Naive thymus-derived CD4-positive, alpha-beta T cell (primary cell): ENCODE measurements at regions of chr13 and their contacts with region 1.

Region 1: GRCh38 chr13:75219479-75220237 is 262.3 kb downstream of the TBC1D4 start:
- DNase-seq: peak; percentile 67 to 87 (median 79)
- ATAC-seq: peak; percentile 96
- H3K4me3 ChIP-seq: no peak overlapping the region
- H3K4me3 Mint-ChIP-seq: peak overlapping the region; percentile 28 to 77 (median 58)
- H3K27ac ChIP-seq: no peak overlapping the region
- H3K27ac Mint-ChIP-seq: peak overlapping the region in 2 of 9 donors; percentile 34 to 87
- H3K4me1 ChIP-seq: peaks cover 0 to 4% of the 10 kb centered on the region in 2 donors
- H3K4me1 Mint-ChIP-seq: peaks cover 6 to 7% (median 7%) of the 10 kb centered on the region in 7 donors
- H3K27me3 ChIP-seq: no peaks in the 10 kb centered on the region
- H3K27me3 Mint-ChIP-seq: peaks cover 15 to 48% (median 27%) of the 10 kb centered on the region in 5 donors

Region 2: GRCh38 chr13:73715114-73715910 is 1504.3 kb before region 1 on chr13:
- CTCF ChIA-PET with region 1: interaction called, 5 read pairs
- POLR2A ChIA-PET with region 1: no interaction called
- intact Hi-C with region 1: loop called in 1 of 2 experiments (anchors 10 kb)
- DNase-seq: peak in 8 of 9 donors; percentile 53 to 85 (median 77)
- ATAC-seq: peak; percentile 90
- H3K4me3 ChIP-seq: peak overlapping the region; percentile 7
- H3K4me3 Mint-ChIP-seq: peak overlapping the region; percentile 72 to 86 (median 78)
- H3K27ac ChIP-seq: peak overlapping the region; percentile 67
- H3K27ac Mint-ChIP-seq: peak overlapping the region; percentile 87 to 99 (median 97)
- H3K4me1 ChIP-seq: peaks cover 34 to 43% of the 10 kb centered on the region in 2 donors
- H3K4me1 Mint-ChIP-seq: peaks cover 25 to 80% (median 58%) of the 10 kb centered on the region in 7 donors
- H3K27me3 ChIP-seq: no peaks in the 10 kb centered on the region
- H3K27me3 Mint-ChIP-seq: no peaks in the 10 kb centered on the region

Region 3: DNA sequence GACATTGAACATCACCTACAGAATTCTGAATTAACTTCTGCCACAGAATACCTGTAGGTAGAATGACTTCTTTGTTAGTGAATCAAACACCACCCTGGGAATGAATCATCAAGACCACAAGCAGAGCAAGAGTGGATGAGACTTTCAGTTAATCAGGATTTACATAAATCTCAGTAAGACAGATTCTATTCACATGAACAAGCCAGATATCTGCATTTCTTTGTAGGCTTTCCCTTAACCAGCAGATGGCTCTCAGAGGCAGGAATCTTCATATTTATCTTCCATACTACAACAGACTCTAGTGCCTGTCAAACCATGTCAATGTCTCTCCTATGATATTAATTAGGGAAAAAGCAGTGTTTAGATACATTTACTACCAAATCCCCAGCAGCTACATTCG is 1497.5 kb before region 1 on chr13:
- CTCF ChIA-PET with region 1: interaction called, 10 read pairs
- POLR2A ChIA-PET with region 1: no interaction called
- intact Hi-C with region 1: loop called (anchors 1 to 10 kb)
- DNase-seq: peak in 3 of 9 donors; percentile 17 to 23 (median 23)
- ATAC-seq: peak; percentile 44
- H3K4me3 ChIP-seq: no peak overlapping the region
- H3K4me3 Mint-ChIP-seq: no peak overlapping the region
- H3K27ac ChIP-seq: no peak overlapping the region
- H3K27ac Mint-ChIP-seq: peak overlapping the region in 8 of 9 donors; percentile 14 to 92 (median 82)
- H3K4me1 ChIP-seq: peaks cover 6 to 7% of the 10 kb centered on the region in 2 donors
- H3K4me1 Mint-ChIP-seq: peaks cover 8 to 55% (median 50%) of the 10 kb centered on the region in 7 donors
- H3K27me3 ChIP-seq: no peaks in the 10 kb centered on the region
- H3K27me3 Mint-ChIP-seq: peaks cover 0 to 7% (median 0%) of the 10 kb centered on the region in 5 donors

Region 4: DNA sequence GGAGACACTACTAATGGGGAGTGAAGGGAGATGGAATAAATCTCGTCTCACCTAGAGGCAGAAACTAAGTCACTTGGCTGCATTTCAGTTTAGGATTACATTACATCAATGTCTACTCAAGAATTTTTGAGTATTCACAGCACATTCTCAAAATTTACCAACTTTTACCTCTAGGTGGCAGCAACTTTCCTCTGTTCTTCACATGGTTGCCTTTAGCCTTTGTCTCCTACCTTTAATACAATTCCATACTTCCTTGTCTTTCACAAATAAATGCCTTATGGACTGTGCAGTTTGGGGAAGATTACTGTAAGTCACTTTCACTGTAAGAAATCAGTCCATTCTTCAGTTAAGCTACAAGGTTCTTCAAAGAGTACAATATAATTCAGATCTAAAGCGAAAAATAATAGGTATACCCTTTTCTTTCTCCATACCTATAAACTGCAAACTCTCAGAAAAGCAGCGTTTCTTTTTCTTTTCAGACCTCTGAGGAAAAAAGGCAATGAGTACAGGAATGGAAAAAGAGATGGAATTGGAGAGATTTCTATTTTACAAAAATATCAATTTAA is 1464.8 kb before region 1 on chr13:
- CTCF ChIA-PET with region 1: interaction called, 4 read pairs
- POLR2A ChIA-PET with region 1: no interaction called
- intact Hi-C with region 1: loop called (anchors 1 to 2 kb)
- DNase-seq: peak in 7 of 9 donors; percentile 32 to 69 (median 59)
- ATAC-seq: peak; percentile 67
- H3K4me3 ChIP-seq: no peak overlapping the region
- H3K4me3 Mint-ChIP-seq: peak overlapping the region in 1 of 10 donors; percentile 5
- H3K27ac ChIP-seq: no peak overlapping the region
- H3K27ac Mint-ChIP-seq: peak overlapping the region; percentile 11 to 96 (median 79)
- H3K4me1 ChIP-seq: peaks cover 0 to 19% of the 10 kb centered on the region in 2 donors
- H3K4me1 Mint-ChIP-seq: peaks cover 13 to 76% (median 57%) of the 10 kb centered on the region in 7 donors
- H3K27me3 ChIP-seq: no peaks in the 10 kb centered on the region
- H3K27me3 Mint-ChIP-seq: no peaks in the 10 kb centered on the region

Region 5: GRCh38 chr13:75482070-75482819 is 262.6 kb after region 1 on chr13 and contains the start of gene TBC1D4:
- CTCF ChIA-PET with region 1: no interaction called
- POLR2A ChIA-PET with region 1: no interaction called
- intact Hi-C with region 1: no loop called
- DNase-seq: peak in 8 of 9 donors; percentile 19 to 69 (median 22)
- ATAC-seq: peak; percentile 85
- H3K4me3 ChIP-seq: peak within 1 kb of the TSS; percentile 60
- H3K4me3 Mint-ChIP-seq: peak within 1 kb of the TSS; percentile 90 to 99 (median 95)
- H3K27ac ChIP-seq: no peak within 1 kb of the TSS
- H3K27ac Mint-ChIP-seq: peak within 1 kb of the TSS in 1 of 9 donors; percentile 83
- H3K4me1 ChIP-seq: peaks cover 0 to 5% of the 10 kb centered on the region in 2 donors
- H3K4me1 Mint-ChIP-seq: peaks cover 7 to 24% (median 18%) of the 10 kb centered on the region in 7 donors
- H3K27me3 ChIP-seq: peaks cover 12 to 15% of the 10 kb centered on the region in 2 donors
- H3K27me3 Mint-ChIP-seq: peaks cover 57 to 80% (median 74%) of the 10 kb centered on the region in 5 donors
- total RNA-seq, gene TBC1D4: 12.4 to 73.8 (median 42.8) TPM